ENCODE measurements at regions of chr7 and their contacts with region 1.

Region 1: GRCh38 chr7:129218514-129219062 is 6.2 kb upstream of the AHCYL2 start:
- DNase-seq: peak; percentile 71 to 92
- H3K4me3 ChIP-seq: no peak overlapping the region
- H3K4me1 ChIP-seq: peaks cover 3% of the 10 kb centered on the region
- H3K27me3 ChIP-seq: no peaks in the 10 kb centered on the region

Region 2: GRCh38 chr7:128322040-128322643 is 896.4 kb before region 1 on chr7:
- in situ Hi-C with region 1: no loop called
- DNase-seq: peak; percentile 19 to 24
- H3K4me3 ChIP-seq: no peak overlapping the region
- H3K4me1 ChIP-seq: no peaks in the 10 kb centered on the region
- H3K27me3 ChIP-seq: no peaks in the 10 kb centered on the region

Region 3: GRCh38 chr7:129401967-129402860 is 183.6 kb after region 1 on chr7:
- in situ Hi-C with region 1: no loop called
- DNase-seq: peak in 1 of 2 experiments; percentile 14
- H3K4me3 ChIP-seq: no peak overlapping the region
- H3K4me1 ChIP-seq: peaks cover 14% of the 10 kb centered on the region
- H3K27me3 ChIP-seq: no peaks in the 10 kb centered on the region

Region 4: GRCh38 chr7:129468087-129468486 is 249.5 kb after region 1 on chr7:
- in situ Hi-C with region 1: loop called (anchors 10 kb)
- DNase-seq: no peak
- H3K4me3 ChIP-seq: no peak overlapping the region
- H3K4me1 ChIP-seq: no peaks in the 10 kb centered on the region
- H3K27me3 ChIP-seq: no peaks in the 10 kb centered on the region

Region 5: DNA sequence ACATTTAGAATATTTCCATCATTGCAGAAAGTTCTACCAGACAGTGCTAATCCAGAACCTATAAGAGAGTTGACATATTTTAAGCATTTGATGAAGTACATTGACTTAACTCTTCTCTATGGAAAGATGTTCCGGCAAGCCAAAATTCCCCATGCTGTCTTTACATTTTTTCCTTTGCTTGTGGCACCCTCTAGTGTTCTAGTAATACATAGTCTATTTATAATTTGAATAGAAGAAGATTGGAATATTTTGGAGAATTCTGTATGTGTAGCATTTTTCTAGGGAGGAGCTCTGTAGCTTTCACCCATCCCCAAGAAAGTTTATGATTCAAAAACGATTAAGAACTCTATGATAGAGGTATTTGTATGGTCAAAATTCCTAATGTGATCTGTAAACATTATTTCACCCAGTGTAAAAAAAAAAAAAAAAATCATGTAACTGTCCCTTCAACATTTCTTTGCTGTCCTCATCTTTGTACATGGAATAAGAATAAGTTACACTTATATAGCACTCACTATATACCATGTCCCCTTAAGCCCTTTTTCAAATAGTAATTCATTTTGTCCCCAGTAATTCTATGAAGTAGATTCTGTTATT is 426.1 kb after region 1 on chr7:
- in situ Hi-C with region 1: loop called (anchors 10 kb)
- DNase-seq: peak in 1 of 2 experiments; percentile 80
- H3K4me3 ChIP-seq: no peak overlapping the region
- H3K4me1 ChIP-seq: peaks cover 19% of the 10 kb centered on the region
- H3K27me3 ChIP-seq: no peaks in the 10 kb centered on the region

Measured in HAP-1 (cell line).